AG04449 (cell line): ENCODE measurements at regions of chr1 and their contacts with region 1.

Region 1: GRCh38 chr1:235971571-235972310 is 93.1 kb downstream of the NID1 start:
- DNase-seq: peak; percentile 74
- H3K4me3 ChIP-seq: peak overlapping the region; percentile 52
- CTCF ChIP-seq: peak; percentile 84

Region 2: GRCh38 chr1:235783148-235783776 is 188.5 kb before region 1 on chr1:
- CTCF ChIA-PET with region 1: interaction called, 48 read pairs
- POLR2A ChIA-PET with region 1: interaction called, 3 read pairs
- DNase-seq: no peak
- H3K4me3 ChIP-seq: no peak overlapping the region
- CTCF ChIP-seq: no peak

Region 3: DNA sequence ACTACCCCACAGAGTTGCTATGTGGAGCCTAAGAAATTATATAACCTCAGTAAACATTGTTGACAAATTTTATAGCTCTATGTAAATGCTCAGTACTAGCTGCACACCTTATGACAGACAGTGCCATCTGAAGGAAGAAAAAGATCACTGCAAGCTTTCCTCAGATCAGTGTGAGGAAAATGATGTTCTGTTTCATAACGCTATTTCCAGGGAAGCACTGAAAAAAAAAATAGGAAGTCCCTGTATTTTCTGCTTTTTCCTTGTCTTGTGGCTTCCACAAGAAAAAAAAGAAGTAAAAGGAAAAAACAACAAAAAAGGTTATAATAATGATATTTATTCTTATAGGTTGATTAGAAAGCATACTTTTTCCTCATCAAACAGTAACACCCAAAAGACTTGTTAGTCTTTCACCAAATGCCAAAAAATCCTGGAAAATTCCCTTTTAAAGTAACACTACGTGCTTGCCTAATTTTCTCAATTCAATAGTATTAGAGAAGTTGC is 128.2 kb before region 1 on chr1:
- CTCF ChIA-PET with region 1: interaction called, 83 read pairs
- POLR2A ChIA-PET with region 1: no interaction called
- DNase-seq: no peak
- H3K4me3 ChIP-seq: no peak overlapping the region
- CTCF ChIP-seq: peak; percentile 53

Region 4: GRCh38 chr1:235932090-235932510 is 39.6 kb before region 1 on chr1:
- CTCF ChIA-PET with region 1: interaction called, 20 read pairs
- POLR2A ChIA-PET with region 1: no interaction called
- DNase-seq: no peak
- H3K4me3 ChIP-seq: no peak overlapping the region
- CTCF ChIP-seq: no peak

Region 5: GRCh38 chr1:235954306-235955283 is 17.1 kb before region 1 on chr1:
- CTCF ChIA-PET with region 1: interaction called, 55 read pairs
- POLR2A ChIA-PET with region 1: no interaction called
- DNase-seq: no peak
- H3K4me3 ChIP-seq: no peak overlapping the region
- CTCF ChIP-seq: no peak

Region 6: GRCh38 chr1:236064674-236065508 is 93.2 kb after region 1 on chr1 and contains the start of gene NID1:
- CTCF ChIA-PET with region 1: interaction called, 16 read pairs
- POLR2A ChIA-PET with region 1: interaction called, 5 read pairs
- DNase-seq: no peak
- H3K4me3 ChIP-seq: peak within 1 kb of the TSS; percentile 72
- CTCF ChIP-seq: peak; percentile 37

Region 7: DNA sequence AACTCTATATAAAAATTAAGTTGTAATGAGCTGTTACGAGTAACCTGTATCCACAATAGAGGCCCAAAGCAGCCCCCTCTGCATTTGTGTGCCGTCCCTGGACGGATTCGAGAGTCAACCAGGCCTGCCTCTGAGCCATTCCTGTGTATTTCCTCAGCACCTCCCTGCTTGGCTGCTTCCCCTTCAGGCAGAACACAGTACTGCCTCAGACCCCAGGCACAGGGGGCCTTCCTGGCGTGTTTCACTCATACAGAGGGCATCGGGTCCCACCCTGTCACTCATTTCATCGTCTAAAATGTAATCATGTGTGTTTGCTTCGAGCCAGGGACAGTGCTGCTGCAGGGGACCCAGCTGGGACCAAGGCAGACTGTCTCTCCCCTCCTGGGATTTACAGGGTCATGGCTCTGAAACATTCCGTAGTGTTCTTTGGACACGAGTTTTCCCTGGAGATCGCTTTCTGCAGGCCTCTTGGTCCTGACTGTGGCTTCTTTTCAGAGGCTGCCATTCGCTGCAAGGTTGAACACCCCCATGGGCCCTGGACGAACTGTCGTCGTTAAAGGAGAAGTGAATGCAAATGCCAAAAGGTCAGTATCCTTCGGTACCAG is 571.4 kb after region 1 on chr1:
- CTCF ChIA-PET with region 1: no interaction called
- POLR2A ChIA-PET with region 1: no interaction called
- DNase-seq: no peak
- H3K4me3 ChIP-seq: no peak overlapping the region
- CTCF ChIP-seq: peak; percentile 7